AG04449 (cell line): ENCODE measurements at regions of chr5 and their contacts with region 1.

Region 1: GRCh38 chr5:96868603-96869371 is 7.5 kb upstream of the ERAP2 start:
- DNase-seq: peak; percentile 42
- H3K4me3 ChIP-seq: no peak overlapping the region
- CTCF ChIP-seq: peak; percentile 92

Region 2: GRCh38 chr5:96743065-96743768 is 125.6 kb before region 1 on chr5:
- CTCF ChIA-PET with region 1: no interaction called
- POLR2A ChIA-PET with region 1: no interaction called
- DNase-seq: no peak
- H3K4me3 ChIP-seq: no peak overlapping the region
- CTCF ChIP-seq: no peak

Region 3: DNA sequence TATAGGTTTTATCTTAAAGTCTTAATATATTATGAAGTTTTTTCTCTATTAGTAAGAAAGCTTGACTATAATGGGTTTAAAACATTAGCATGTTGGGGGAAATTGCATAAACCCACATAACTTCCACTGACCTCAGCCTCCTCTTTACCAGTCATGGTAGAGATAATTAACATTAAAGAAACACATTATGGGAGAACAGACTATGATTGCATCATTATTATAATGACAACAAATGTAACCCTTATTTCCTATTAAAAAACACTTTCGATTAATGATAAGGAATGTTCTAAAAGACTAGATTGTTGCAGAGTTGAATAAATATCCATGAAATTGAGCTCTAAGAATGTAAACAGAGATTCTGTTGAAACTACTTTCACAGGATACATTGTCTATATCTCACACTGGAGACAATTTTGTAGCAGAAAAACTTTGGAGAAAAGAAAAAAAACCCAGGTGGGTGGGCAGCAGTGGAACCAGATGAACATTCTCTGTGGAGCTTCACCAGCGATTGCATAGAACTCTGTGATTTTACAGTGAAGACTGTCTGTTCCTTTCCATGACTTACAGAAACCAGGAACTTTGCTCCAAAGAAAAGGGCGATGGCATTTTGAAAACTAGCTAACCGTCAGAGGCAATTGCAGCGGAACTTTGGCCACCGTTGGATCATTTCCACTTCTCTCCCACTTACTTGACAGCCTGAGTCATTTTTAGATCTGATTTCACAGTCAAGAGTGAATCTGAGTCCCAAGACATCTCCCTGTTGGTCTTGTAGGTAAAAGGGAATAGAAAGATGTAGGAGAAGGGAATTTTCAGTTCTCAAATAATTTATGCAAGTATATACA is 13.5 kb before region 1 on chr5:
- CTCF ChIA-PET with region 1: interaction called, 38 read pairs
- POLR2A ChIA-PET with region 1: no interaction called
- DNase-seq: no peak
- H3K4me3 ChIP-seq: no peak overlapping the region
- CTCF ChIP-seq: no peak

Region 4: GRCh38 chr5:96997265-96997859 is 128.6 kb after region 1 on chr5:
- CTCF ChIA-PET with region 1: interaction called, 21 read pairs
- POLR2A ChIA-PET with region 1: no interaction called
- DNase-seq: no peak
- H3K4me3 ChIP-seq: no peak overlapping the region
- CTCF ChIP-seq: peak; percentile 45

Region 5: DNA sequence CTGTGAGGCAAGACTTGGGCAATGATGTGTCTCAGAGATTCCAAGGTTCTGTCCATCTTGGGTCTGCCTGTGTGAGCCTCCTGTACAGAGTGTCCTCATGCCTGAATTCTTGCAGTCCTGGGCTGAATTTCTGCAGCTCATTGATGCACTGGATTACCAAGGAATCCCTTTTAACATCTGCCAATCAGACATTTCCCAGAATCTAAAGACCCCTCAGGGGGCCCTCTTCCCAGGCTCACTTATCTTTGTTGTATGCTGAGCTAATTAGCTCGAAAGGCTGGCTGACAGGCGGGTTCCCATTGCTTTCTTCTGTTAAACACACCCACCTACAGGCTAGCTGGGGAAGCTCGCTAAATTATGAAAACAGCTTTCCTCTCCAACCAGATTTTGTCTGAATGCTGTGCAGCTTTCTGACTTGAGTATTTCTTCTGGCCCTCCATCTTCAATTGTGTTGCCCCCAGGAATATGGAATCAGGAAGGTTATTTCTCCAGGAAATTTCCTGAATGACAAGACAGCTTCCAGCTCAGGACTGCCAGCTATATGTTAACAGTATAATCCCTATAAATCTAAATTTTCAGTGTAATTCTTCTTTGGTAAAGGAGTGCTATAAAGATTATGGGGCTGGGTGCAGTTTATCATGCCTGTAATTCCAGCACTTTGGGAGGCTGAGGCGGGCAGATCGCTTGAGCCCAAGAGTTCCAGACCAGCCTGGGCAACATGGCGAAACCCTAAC is 273.9 kb after region 1 on chr5 and contains the start of gene LIX1:
- CTCF ChIA-PET with region 1: interaction called, 34 read pairs
- POLR2A ChIA-PET with region 1: no interaction called
- DNase-seq: no peak
- H3K4me3 ChIP-seq: no peak within 1 kb of the TSS
- CTCF ChIP-seq: peak; percentile 40